Posterior vena cava (tissue), 2 donors: ENCODE measurements at regions of chr15 and their contacts with region 1.

Region 1: DNA sequence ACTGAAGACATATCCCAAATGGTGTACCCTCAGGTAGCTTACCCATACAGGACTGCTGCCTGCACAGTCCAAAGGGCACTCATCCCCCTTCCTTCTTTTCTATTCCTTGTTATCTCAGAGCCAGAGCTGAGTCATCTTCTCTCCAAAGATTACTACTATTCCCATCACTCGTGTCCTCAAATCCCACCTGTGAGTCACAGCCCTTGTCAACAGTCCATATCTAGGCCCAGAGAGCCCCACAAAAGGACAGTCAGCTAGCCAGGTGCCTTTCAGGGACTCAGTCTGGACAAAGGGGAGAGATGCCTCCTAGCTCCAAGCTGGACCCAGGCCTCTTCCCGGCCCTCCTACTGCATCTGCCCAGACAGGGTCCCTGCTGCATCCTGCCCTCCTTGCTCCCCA is 11.0 kb downstream of the PARP16 start:
- DNase-seq: no peak

Region 2: GRCh38 chr15:65184868-65185738 is 90.6 kb before region 1 on chr15 and contains the start of gene CLPX:
- intact Hi-C with region 1: loop called (anchors 5 kb)
- DNase-seq: peak; percentile 98
- total RNA-seq, gene CLPX: 28.9 to 34.8 TPM

Region 3: GRCh38 chr15:65192016-65192415 is 83.7 kb before region 1 on chr15:
- intact Hi-C with region 1: loop called (anchors 5 kb)
- DNase-seq: peak; percentile 40